GM18951 (cell line): ENCODE measurements at regions of chr18 and their contacts with region 1.

Region 1: GRCh38 chr18:62239475-62239874 is 52.4 kb downstream of the RELCH start:
- POLR2A ChIP-seq: no peak

Region 2: GRCh38 chr18:61669320-61669719 is 570.2 kb before region 1 on chr18:
- in situ Hi-C with region 1: no loop called
- POLR2A ChIP-seq: no peak

Region 3: GRCh38 chr18:61870151-61870550 is 369.3 kb before region 1 on chr18:
- in situ Hi-C with region 1: no loop called
- POLR2A ChIP-seq: no peak

Region 4: DNA sequence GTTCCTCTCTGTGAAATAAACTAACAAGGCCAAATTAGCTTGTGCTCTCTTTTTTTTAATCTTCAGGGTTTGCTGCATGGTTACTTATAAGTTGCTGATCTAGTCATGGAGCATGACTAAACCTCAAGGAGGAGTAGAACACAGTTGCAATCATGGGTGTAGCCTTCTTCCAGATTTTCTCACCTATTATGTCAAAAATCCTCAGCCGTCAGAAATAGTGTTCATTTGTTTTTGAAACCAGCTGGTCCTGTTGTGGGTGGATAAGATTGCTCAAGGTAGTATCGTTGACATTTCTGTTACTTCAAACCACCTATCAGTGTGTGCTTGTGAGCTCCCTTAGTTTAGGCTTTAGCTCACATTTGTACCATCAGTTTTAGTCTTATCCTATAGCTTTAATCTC is 41.2 kb before region 1 on chr18:
- in situ Hi-C with region 1: loop called (anchors 5 kb)
- POLR2A ChIP-seq: no peak